Breast epithelium (tissue), 4 donors: ENCODE measurements at regions of chr10 and their contacts with region 1.

Region 1: GRCh38 chr10:86585037-86585725 is 63.6 kb upstream of the WAPL start:
- DNase-seq: peak; percentile 48 to 68
- H3K4me3 ChIP-seq: no peak overlapping the region
- H3K27ac ChIP-seq: peak overlapping the region; percentile 64 to 75
- H3K4me1 ChIP-seq: peaks cover 0 to 4% of the 10 kb centered on the region in 2 donors
- H3K27me3 ChIP-seq: no peaks in the 10 kb centered on the region
- CTCF ChIP-seq: peak; percentile 76 to 98 (median 96)
- POLR2A ChIP-seq: no peak

Region 2: DNA sequence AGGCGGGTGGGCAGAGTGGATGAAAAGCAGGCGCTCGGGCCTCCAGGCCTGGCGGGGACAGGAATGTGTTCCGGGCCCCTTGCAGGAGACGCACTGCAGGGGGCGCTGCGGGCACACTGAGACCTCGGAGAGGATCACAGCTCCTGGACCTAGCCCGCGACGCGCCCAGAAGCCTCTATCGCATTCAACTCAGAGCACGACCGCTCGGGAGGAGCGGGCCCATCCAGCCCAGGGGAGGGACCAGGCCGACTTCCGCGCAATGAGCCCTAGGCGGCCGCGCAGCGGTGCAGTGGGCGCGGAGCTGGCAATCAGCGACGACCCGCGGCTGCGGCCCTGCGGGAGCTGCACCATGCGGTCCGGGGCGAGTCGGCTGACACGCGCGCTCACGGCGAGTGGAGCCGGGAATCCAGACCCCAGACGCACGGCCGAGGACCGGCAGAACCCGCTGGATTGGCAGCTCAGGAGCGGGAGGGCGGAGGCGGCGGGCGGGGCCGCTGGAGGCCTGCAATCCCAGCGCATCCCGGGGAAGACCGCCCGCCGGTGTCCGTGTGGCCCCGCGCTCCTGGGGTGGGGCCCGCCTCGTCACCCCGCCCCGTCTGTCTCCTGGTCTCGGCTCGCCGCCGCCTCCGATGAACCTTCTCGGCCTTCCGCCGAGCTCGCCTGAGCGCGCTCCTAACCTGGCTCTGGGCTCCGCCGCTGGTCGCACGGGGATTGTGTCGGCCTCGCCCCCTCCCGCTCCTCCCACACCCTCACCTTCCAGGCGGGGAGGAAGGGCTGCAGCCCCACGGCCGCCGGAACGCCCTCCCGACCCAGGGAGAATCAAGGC is 185.1 kb before region 1 on chr10:
- intact Hi-C with region 1: loop called (anchors 10 kb)
- DNase-seq: peak; percentile 87 to 92
- H3K4me3 ChIP-seq: peak overlapping the region; percentile 52 to 77 (median 69)
- H3K27ac ChIP-seq: peak overlapping the region; percentile 84 to 92
- H3K4me1 ChIP-seq: no peaks in the 10 kb centered on the region
- H3K27me3 ChIP-seq: no peaks in the 10 kb centered on the region
- CTCF ChIP-seq: peak; percentile 63 to 90 (median 89)
- POLR2A ChIP-seq: no peak

Region 3: DNA sequence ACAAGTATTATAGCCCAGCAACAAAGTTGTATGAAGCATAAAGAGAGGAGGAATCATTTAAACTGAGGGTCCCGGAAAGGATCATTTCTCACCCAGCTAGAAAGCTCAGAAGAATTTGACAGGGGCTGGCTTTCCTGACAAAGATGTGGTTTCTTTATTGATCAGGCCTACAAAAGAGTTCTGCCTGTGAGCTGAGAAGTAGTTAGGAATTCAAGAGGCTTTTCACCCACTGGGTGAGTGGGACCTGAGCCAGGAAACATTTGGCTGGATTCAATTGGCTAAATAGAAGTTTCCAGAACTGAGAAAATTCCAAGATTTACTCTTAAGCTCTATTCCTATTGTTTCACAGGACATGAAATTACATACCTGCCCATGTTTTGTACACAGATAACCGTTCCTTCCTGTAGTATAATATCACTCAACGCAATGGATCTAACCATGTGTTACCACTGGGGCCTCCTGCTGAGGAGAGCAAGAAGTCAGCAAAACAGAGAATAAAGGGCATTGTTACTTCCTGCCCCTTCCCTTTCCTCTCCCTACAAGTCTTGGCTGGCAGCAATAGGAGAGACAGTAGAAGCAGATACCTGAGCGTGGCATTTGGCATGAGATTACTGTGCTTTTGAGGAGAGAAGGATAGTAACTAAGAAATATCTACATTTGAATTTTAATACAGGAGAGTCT is 1020.6 kb after region 1 on chr10:
- intact Hi-C with region 1: no loop called
- DNase-seq: no peak
- H3K4me3 ChIP-seq: no peak overlapping the region
- H3K27ac ChIP-seq: peak overlapping the region; percentile 48 to 80
- H3K4me1 ChIP-seq: peaks cover 0 to 3% of the 10 kb centered on the region in 2 donors
- H3K27me3 ChIP-seq: no peaks in the 10 kb centered on the region
- CTCF ChIP-seq: no peak
- POLR2A ChIP-seq: no peak